MCF 10A (cell line): ENCODE measurements at regions of chr22 and their contacts with region 1.

Region 1: GRCh38 chr22:46563381-46564083 is 26.1 kb upstream of the CELSR1 start:
- DNase-seq: peak; percentile 66
- H3K4me3 Mint-ChIP-seq: peak overlapping the region; percentile 35
- H3K27ac Mint-ChIP-seq: no peak overlapping the region
- H3K4me1 Mint-ChIP-seq: peaks cover 14% of the 10 kb centered on the region
- H3K27me3 Mint-ChIP-seq: no peaks in the 10 kb centered on the region
- CTCF ChIP-seq: peak; percentile 87

Region 2: DNA sequence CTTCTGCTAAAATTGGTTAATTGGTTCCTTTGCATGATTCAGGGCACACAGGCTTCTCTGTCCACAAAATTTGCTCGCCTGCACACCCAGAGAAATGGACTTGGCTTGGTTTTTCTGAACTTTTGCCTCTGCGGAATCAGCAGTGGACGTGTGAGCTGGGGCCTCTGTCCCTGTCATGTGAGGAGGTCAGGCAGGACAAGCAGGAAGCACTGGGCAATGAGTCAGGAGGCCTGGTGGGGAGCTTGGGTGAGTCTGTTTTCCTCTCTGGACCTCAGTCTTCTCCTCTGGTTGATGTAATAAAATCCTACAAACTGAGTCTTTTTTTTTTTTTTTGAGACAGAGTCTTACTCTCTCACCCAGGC is 15.7 kb before region 1 on chr22:
- CTCF ChIA-PET with region 1: interaction called, 30 read pairs
- POLR2A ChIA-PET with region 1: interaction called, 31 read pairs
- intact Hi-C with region 1: no loop called
- DNase-seq: no peak
- H3K4me3 Mint-ChIP-seq: peak overlapping the region; percentile 33
- H3K27ac Mint-ChIP-seq: peak overlapping the region; percentile 85
- H3K4me1 Mint-ChIP-seq: peaks cover 21% of the 10 kb centered on the region
- H3K27me3 Mint-ChIP-seq: no peaks in the 10 kb centered on the region
- CTCF ChIP-seq: no peak

Region 3: DNA sequence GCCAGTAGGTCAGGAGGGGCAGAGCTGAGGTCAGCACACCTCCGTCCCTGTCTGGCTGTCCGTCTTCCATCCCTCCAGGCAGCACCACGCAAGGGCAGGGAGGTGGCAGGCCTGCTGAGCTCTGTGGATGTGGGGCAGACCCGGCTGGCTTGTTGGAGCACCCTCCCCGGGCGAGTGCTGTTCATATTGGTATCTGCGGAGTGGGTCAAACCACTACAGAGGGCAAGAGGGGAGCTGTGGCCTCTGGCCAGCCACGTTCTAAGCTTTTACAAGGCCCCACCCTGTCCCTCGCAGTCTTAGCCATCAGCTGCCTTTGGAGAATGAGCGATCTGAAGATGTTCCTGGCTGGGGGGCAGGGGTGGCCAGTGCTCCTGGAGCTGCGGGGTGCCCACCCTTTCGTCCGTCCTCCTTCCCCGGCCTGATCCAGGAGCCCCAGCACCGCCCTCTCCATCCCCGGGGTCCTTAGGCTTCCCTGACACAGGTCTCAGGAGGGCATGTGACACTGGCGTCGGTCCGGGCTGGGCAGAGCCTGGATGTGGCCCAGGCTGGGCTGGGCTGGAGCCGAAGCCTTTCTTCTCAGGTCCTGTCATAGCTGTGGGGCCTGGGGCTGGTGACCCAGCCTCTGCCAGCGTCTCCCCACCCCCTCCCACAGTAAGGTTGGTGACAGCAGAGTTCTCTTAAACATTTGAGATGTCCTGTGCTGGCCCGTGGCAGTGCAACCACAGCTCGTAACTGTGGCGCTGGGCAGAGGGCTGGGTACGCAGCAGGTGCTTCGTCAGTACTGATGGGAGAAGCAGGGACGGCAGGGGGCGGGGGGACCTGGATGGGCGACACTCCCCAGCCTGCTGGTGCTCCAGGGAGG is 25.0 kb after region 1 on chr22:
- CTCF ChIA-PET with region 1: interaction called, 14 read pairs
- POLR2A ChIA-PET with region 1: no interaction called
- intact Hi-C with region 1: no loop called
- DNase-seq: no peak
- H3K4me3 Mint-ChIP-seq: no peak overlapping the region
- H3K27ac Mint-ChIP-seq: no peak overlapping the region
- H3K4me1 Mint-ChIP-seq: no peaks in the 10 kb centered on the region
- H3K27me3 Mint-ChIP-seq: no peaks in the 10 kb centered on the region
- CTCF ChIP-seq: no peak

Region 4: GRCh38 chr22:46669201-46669600 is 105.7 kb after region 1 on chr22:
- CTCF ChIA-PET with region 1: interaction called, 14 read pairs
- POLR2A ChIA-PET with region 1: no interaction called
- intact Hi-C with region 1: loop called (anchors 5 kb)
- DNase-seq: no peak
- H3K4me3 Mint-ChIP-seq: no peak overlapping the region
- H3K27ac Mint-ChIP-seq: no peak overlapping the region
- H3K4me1 Mint-ChIP-seq: no peaks in the 10 kb centered on the region
- H3K27me3 Mint-ChIP-seq: no peaks in the 10 kb centered on the region
- CTCF ChIP-seq: no peak

Region 5: DNA sequence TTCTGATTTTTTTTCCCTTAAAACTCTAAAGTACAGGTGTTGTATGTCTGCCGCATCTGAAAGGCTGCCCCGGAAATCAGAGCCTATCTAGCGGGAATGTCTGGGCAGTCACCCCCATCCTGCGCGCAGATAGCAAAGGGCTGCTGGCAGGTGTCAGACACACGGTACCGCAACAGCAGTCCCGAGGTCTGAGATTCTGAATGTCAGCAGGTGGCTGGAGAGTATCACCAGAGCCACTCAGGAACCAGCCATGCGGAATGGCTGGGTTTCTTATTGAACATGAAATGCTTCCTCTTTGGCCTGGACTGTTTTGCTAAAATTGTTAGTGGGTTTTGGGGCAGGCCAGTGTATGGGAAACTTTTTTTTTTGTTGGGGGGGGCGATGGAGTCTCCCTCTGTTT is 121.2 kb after region 1 on chr22:
- CTCF ChIA-PET with region 1: no interaction called
- POLR2A ChIA-PET with region 1: no interaction called
- intact Hi-C with region 1: no loop called
- DNase-seq: no peak
- H3K4me3 Mint-ChIP-seq: no peak overlapping the region
- H3K27ac Mint-ChIP-seq: no peak overlapping the region
- H3K4me1 Mint-ChIP-seq: no peaks in the 10 kb centered on the region
- H3K27me3 Mint-ChIP-seq: no peaks in the 10 kb centered on the region
- CTCF ChIP-seq: no peak

Region 6: DNA sequence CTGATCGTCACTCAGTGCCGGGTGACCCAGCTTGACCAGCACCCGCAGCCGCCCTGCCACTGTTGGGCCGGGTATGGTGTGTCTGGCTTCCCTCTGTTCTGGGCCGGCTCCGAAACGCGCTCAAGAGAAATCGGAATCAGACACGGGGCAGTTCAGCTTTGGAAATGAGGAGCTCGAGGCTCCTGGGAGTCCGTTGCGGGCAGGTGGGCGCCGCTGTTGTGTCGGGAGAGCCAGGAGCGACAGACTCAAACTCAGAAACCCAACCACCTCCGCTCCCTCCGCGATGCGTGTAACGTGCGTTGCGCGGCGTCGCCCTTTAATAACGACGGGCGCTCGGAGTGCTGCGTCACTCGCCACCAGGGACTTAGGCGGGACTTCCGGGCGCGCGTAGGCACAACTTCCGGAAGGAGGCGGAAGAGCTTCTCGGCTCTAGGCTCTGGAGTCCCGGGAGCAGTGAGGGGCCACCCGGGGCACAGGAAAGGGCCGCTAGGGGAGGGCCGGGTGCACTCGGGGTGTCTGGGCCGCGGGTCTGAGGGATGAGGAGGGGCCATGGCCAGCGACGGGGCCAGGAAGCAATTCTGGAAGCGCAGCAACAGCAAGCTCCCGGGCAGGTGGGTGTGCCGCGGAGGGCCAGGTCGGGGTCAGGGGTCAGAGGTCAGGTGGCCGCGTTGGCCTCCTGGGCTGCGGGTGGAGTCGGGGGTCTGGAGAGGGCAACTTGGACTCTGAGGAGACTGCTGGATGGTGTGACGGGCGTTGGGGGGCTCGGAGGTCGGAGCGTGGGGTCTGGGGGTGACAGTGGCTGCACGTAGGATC is 198.9 kb after region 1 on chr22 and contains the start of gene TBC1D22A:
- CTCF ChIA-PET with region 1: interaction called, 5 read pairs
- POLR2A ChIA-PET with region 1: interaction called, 8 read pairs
- intact Hi-C with region 1: loop called (anchors 5 kb)
- DNase-seq: peak; percentile 93
- H3K4me3 Mint-ChIP-seq: peak within 1 kb of the TSS; percentile 99
- H3K27ac Mint-ChIP-seq: peak within 1 kb of the TSS; percentile 100
- H3K4me1 Mint-ChIP-seq: peaks cover 29% of the 10 kb centered on the region
- H3K27me3 Mint-ChIP-seq: no peaks in the 10 kb centered on the region
- CTCF ChIP-seq: no peak
- total RNA-seq, gene TBC1D22A: 26.0 and 27.7 TPM in 2 replicates